Right ventricle myocardium superior (tissue), 1 donor: ENCODE measurements at regions of chr6 and their contacts with region 1.

Region 1: GRCh38 chr6:138817822-138818308 is 22.0 kb downstream of the ECT2L start:
- DNase-seq: no peak
- ATAC-seq: peak; percentile 19

Region 2: GRCh38 chr6:138773177-138774091 is 44.4 kb before region 1 on chr6 and contains the start of gene CCDC28A:
- intact Hi-C with region 1: no loop called
- DNase-seq: peak; percentile 96
- ATAC-seq: peak; percentile 98
- total RNA-seq, gene CCDC28A: 6.8 TPM

Region 3: DNA sequence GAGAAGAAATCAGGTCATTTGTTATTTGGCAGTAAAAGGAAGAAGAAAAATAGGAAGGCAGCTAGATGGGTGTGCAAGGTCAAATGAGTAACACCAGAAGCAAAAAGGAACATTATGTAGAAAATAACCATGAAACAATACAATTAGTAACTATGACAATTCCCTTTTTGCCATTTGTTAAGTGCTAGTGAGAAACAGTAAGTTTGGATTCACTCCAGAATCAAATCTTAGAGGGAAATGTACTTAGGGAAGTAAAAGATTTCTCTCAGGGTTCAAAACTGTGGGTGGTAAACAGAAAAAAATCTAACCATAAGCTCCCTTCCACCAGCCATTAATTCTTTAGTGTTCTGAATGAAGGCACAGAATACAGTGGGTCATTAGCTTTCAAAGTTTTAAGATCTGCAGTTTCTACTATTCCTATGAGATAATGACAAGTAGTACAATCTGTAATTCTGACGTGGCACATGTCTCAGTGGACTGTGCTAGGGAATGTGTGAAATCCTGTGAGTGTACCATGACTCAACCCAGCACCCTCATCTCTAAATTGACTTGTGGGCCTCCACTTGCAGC is 153.1 kb after region 1 on chr6:
- intact Hi-C with region 1: no loop called
- DNase-seq: no peak
- ATAC-seq: peak; percentile 74

Region 4: DNA sequence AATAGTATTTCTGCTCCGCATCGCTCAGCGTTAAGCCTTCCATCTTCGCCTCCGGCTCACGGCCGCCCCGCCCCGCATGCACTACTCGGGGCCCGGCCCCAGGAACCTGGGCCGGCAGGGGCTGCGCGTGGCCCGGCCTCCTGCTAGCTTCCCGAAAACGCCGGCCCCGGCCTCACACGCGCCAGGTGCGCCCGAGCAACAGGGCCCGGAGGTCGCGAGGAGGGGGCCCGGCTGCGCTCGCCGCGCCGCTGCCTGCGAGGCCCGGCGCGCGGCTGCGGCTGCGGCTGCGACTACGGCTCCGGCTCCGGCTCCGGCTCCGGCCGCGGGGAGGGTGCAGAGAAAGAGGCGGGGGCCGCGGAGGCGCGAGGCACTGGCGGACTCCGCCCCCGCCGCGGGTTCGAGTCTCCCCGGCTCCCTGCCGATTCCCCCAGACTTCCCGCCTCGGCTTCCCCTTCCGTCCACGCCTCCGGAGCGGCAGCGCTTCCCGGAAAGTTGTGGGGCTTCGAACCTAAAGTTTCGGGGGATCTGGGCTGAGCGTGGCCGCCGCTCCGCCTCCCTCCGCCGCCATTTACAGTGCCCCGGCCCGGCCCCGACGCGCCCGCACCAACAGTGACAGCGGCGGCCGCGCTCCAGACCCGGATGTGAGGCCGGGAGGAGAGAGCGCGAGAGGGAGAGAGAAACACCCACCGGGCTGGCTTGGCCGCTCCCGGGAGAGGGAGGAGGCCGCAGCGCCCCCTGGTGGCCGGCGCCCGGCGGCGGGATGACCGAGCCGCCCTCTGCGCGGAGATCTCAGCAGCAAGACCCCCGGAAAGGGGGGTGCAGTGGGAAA is 170.0 kb after region 1 on chr6 and contains the start of gene REPS1:
- intact Hi-C with region 1: loop called (anchors 5 kb)
- DNase-seq: peak; percentile 96
- ATAC-seq: peak; percentile 97
- total RNA-seq, gene REPS1: 31.0 TPM